ENCODE measurements at regions of chr11 and their contacts with region 1.

Region 1: GRCh38 chr11:47800759-47801158 is 33.6 kb upstream of the FNBP4 start:
- DNase-seq: peak in 3 of 5 donors; percentile 16 to 29 (median 20)
- ATAC-seq: peak; percentile 92 to 96 (median 92)
- H3K4me3 ChIP-seq: no peak overlapping the region
- H3K27ac ChIP-seq: peak overlapping the region in 9 of 12 donors; percentile 2 to 75 (median 47)
- H3K4me1 ChIP-seq: peaks cover 0 to 6% (median 0%) of the 10 kb centered on the region in 12 donors
- H3K27me3 ChIP-seq: no peaks in the 10 kb centered on the region
- CTCF ChIP-seq: peak in 2 of 12 donors; percentile 11 to 15
- POLR2A ChIP-seq: no peak

Region 2: GRCh38 chr11:47485110-47485509 is 315.6 kb before region 1 on chr11:
- intact Hi-C with region 1: no loop called
- DNase-seq: no peak
- ATAC-seq: no peak
- H3K4me3 ChIP-seq: no peak overlapping the region
- H3K27ac ChIP-seq: no peak overlapping the region
- H3K4me1 ChIP-seq: peaks cover 0 to 32% (median 11%) of the 10 kb centered on the region in 12 donors
- H3K27me3 ChIP-seq: no peaks in the 10 kb centered on the region
- CTCF ChIP-seq: no peak
- POLR2A ChIP-seq: no peak

Region 3: DNA sequence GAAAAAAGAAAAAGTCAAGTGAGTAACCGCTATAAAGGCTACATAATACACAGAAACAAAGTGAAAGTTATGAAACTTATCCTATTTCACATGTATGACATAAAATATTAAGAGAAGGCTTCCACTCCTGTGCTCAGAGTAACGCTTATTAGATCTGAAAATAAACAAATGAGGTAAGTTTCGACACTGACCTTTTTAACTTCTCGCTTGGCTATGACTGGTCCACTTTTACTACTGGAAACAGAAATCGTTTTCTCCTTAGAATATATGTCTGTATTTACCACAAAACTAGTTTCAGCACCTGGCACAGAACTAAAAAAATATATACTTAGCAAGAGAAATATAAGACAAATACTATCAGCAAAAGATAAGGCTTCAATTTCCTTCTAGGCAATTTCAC is 50.0 kb before region 1 on chr11:
- intact Hi-C with region 1: loop called in 4 of 10 experiments (anchors 10 kb)
- DNase-seq: no peak
- ATAC-seq: no peak
- H3K4me3 ChIP-seq: no peak overlapping the region
- H3K27ac ChIP-seq: no peak overlapping the region
- H3K4me1 ChIP-seq: no peaks in the 10 kb centered on the region
- H3K27me3 ChIP-seq: no peaks in the 10 kb centered on the region
- CTCF ChIP-seq: no peak
- POLR2A ChIP-seq: no peak

Region 4: DNA sequence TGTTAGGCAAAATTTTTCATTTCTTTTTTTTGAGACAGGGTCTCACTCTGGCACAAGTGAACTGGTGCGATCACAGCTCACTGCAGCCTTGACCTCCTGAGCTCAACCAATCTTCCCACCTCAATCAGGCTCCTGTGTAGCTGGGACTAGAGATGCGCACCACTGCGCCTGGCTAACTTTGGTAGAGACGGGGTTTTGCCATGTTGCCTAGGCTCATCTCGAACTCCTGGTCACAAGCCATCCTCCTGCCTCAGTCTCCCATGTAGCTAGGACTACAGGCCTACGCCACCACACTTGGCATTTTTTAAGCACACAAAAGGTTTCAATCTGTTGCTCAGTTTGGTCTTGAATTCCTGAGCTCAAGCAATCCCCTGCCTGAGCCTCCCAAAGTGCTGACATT is 42.7 kb before region 1 on chr11:
- intact Hi-C with region 1: loop called in 2 of 10 experiments (anchors 10 kb)
- DNase-seq: no peak
- ATAC-seq: no peak
- H3K4me3 ChIP-seq: no peak overlapping the region
- H3K27ac ChIP-seq: no peak overlapping the region
- H3K4me1 ChIP-seq: peaks cover 0 to 12% (median 0%) of the 10 kb centered on the region in 12 donors
- H3K27me3 ChIP-seq: no peaks in the 10 kb centered on the region
- CTCF ChIP-seq: no peak
- POLR2A ChIP-seq: no peak

Region 5: GRCh38 chr11:47766305-47767227 is 34.2 kb before region 1 on chr11:
- intact Hi-C with region 1: loop called in 1 of 10 experiments (anchors 5 kb)
- DNase-seq: peak; percentile 69 to 81 (median 74)
- ATAC-seq: peak in 3 of 4 donors; percentile 6 to 44 (median 35)
- H3K4me3 ChIP-seq: peak overlapping the region; percentile 63 to 99 (median 86)
- H3K27ac ChIP-seq: peak overlapping the region; percentile 90 to 100 (median 98)
- H3K4me1 ChIP-seq: peaks cover 0 to 39% (median 24%) of the 10 kb centered on the region in 12 donors
- H3K27me3 ChIP-seq: no peaks in the 10 kb centered on the region
- CTCF ChIP-seq: no peak
- POLR2A ChIP-seq: no peak